ENCODE measurements at regions of chr18 and their contacts with region 1.

Region 1: DNA sequence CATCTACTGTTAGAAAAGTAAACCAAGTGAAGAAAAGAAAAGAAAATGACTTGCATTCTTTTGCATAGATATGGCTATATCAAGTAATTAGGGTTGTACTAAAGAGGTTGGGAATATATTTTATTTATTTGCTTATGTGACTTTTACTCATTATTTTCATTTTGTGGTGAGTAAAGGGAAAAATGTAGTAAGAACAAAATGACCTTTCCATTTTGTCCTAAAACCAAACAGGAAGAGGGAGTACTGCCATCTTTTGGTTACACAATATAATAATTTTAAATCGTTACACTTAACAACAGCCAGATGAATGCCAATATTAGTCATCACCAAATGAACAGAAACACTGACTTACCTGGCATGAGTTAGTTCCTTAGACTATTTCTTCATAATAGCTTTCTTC is 47.3 kb upstream of the NDUFV2 start:
- DNase-seq: no peak
- ATAC-seq: peak; percentile 84
- H3K4me3 ChIP-seq: no peak overlapping the region
- H3K27ac ChIP-seq: peak overlapping the region in 1 of 2 donors; percentile 19
- H3K4me1 ChIP-seq: no peaks in the 10 kb centered on the region
- H3K27me3 ChIP-seq: no peaks in the 10 kb centered on the region

Region 2: GRCh38 chr18:8696749-8697211 is 358.4 kb before region 1 on chr18:
- intact Hi-C with region 1: loop called in 1 of 2 experiments (anchors 10 kb)
- DNase-seq: peak; percentile 71 to 92
- ATAC-seq: peak; percentile 95
- H3K4me3 ChIP-seq: no peak overlapping the region
- H3K27ac ChIP-seq: no peak overlapping the region
- H3K4me1 ChIP-seq: no peaks in the 10 kb centered on the region
- H3K27me3 ChIP-seq: no peaks in the 10 kb centered on the region

Region 3: DNA sequence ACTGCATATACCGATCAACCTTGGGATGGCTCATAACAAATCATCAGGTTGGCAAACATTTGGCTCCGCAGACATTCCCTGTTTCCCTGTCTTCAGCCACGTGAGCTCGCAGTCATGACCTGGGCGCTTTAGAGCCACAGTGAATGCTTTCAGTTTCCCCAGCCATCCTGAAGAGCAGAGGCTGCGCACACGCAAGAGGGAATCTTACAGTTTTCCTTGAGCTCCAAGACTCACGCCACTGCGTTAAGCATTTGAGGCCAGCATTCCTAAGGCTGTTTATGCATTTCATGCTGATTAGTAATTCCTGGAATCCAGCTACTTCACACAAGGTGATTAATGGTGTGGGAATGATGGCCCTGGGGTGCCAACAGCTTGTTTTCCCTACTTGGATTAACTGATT is 254.7 kb before region 1 on chr18:
- intact Hi-C with region 1: loop called in 1 of 2 experiments (anchors 10 kb)
- DNase-seq: no peak
- ATAC-seq: no peak
- H3K4me3 ChIP-seq: peak overlapping the region; percentile 6 to 60
- H3K27ac ChIP-seq: peak overlapping the region in 1 of 2 donors; percentile 62
- H3K4me1 ChIP-seq: no peaks in the 10 kb centered on the region
- H3K27me3 ChIP-seq: no peaks in the 10 kb centered on the region

Region 4: GRCh38 chr18:8930990-8931648 is 124.1 kb before region 1 on chr18:
- intact Hi-C with region 1: no loop called
- DNase-seq: no peak
- ATAC-seq: no peak
- H3K4me3 ChIP-seq: no peak overlapping the region
- H3K27ac ChIP-seq: no peak overlapping the region
- H3K4me1 ChIP-seq: no peaks in the 10 kb centered on the region
- H3K27me3 ChIP-seq: peaks cover 0 to 3% of the 10 kb centered on the region in 2 donors